ENCODE measurements at regions of chr9 and their contacts with region 1.

Region 1: DNA sequence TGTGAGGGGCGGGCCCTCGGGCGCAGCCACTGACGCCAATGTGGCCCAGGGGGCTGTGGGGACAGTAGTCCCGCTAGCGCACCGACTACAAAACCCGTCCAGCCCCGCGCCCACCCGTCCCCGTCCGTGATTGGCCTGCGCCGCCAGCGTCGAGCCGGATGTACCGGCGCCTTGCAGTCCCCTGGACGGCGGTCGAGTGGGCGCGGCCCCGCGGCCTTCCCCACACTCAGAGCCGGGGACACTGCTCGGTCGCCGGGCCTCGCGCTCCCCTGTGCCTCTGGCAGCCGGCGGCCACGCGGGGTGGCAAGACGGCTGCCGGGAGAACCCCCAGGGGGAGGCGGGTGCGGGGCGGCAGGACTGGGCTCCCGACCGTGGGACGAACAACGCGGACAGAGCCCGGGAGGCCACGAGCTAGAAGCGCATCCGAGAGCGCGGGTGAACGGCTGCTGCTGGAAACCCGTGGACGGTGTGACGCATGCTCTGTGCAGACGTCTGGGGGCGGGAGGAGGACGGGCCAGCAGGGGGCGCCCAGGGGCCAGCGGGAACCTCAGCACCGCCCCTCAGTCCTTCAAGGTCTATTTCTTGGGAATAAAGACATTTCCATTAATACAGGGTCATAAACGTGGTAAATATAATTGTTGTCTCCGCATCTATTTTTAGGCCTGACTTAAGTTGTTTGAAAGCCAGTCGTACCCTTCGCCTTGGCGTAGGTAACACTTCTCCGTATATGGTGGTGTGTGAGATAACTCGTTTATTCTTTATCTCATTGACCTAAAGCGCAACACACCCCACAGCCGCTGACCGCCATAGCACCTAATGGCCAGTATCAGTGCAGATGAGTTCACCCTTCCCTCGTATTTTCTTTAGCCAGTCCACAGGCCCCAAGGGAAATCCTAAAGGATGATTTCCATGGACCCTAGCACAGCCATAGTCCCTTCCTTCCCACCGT is 629 bp upstream of the BICD2 start:
- DNase-seq: peak; percentile 94 to 99 (median 98)
- ATAC-seq: peak; percentile 94
- H3K4me3 ChIP-seq: peak overlapping the region; percentile 68
- H3K4me3 Mint-ChIP-seq: peak overlapping the region; percentile 79 to 96 (median 88)
- H3K27ac ChIP-seq: peak overlapping the region; percentile 98
- H3K27ac Mint-ChIP-seq: peak overlapping the region; percentile 87 to 98 (median 98)
- H3K4me1 ChIP-seq: peaks cover 32 to 33% of the 10 kb centered on the region in 2 donors
- H3K4me1 Mint-ChIP-seq: peaks cover 37 to 65% (median 55%) of the 10 kb centered on the region in 7 donors
- H3K27me3 ChIP-seq: no peaks in the 10 kb centered on the region
- H3K27me3 Mint-ChIP-seq: no peaks in the 10 kb centered on the region

Region 2: DNA sequence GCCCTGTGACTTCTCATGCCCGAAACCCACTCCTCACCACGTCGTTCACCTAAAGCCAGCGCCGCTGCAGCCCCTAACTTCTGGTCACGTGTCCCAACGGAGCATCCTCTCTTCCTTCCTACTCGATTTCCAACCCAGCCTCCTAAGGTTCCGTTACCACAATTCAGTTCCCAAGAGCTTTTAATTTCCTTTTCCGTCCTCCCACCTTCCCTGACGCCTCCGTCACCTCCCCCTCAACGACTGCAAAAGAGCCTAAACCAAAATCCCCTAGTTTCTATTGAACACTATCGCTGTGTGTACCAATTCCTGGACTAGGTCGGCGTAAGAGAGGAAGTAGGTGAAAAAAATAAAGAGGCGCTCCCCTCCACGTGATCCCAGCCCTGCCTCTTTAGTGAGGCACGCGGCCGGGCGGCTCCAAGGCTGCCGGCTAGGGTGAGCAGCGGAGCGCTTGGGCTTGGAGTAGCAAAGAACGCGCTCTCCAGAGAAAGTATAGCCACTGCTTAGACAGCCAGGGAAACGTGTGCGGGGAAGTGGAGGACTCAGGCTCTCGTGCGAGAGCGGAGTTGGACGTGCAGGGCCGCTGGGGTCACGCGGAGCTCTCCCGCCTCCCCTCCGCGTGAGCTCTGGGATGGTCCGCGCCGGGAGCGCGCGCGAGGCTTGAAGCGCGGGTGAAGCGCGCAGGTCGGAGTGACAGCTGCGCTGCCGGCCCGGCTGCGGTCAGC is 439.8 kb before region 1 on chr9 and contains the starts of genes CENPP and NOL8:
- CTCF ChIA-PET with region 1: no interaction called
- POLR2A ChIA-PET with region 1: interaction called, 3 read pairs
- intact Hi-C with region 1: loop called (anchors 1 kb)
- DNase-seq: peak; percentile 75 to 91 (median 89)
- ATAC-seq: peak; percentile 95
- H3K4me3 ChIP-seq: peak within 1 kb of the TSS; percentile 90
- H3K4me3 Mint-ChIP-seq: peak within 1 kb of the TSS; percentile 94 to 100 (median 98)
- H3K27ac ChIP-seq: peak within 1 kb of the TSS; percentile 88
- H3K27ac Mint-ChIP-seq: peak within 1 kb of the TSS; percentile 97 to 100 (median 99)
- H3K4me1 ChIP-seq: peaks cover 11 to 12% of the 10 kb centered on the region in 2 donors
- H3K4me1 Mint-ChIP-seq: peaks cover 14 to 41% (median 35%) of the 10 kb centered on the region in 7 donors
- H3K27me3 ChIP-seq: no peaks in the 10 kb centered on the region
- H3K27me3 Mint-ChIP-seq: no peaks in the 10 kb centered on the region
- total RNA-seq, gene CENPP: 2.5 to 24.3 (median 4.1) TPM
- total RNA-seq, gene NOL8: 42.8 to 115 (median 67.2) TPM

Region 3: GRCh38 chr9:92781923-92782322 is 16.7 kb after region 1 on chr9:
- CTCF ChIA-PET with region 1: no interaction called
- POLR2A ChIA-PET with region 1: interaction called, 4 read pairs
- intact Hi-C with region 1: loop called in 1 of 2 experiments (anchors 1 kb)
- DNase-seq: peak in 1 of 9 donors; percentile 41
- ATAC-seq: peak; percentile 57
- H3K4me3 ChIP-seq: no peak overlapping the region
- H3K4me3 Mint-ChIP-seq: peak overlapping the region in 1 of 10 donors; percentile 26
- H3K27ac ChIP-seq: no peak overlapping the region
- H3K27ac Mint-ChIP-seq: peak overlapping the region in 7 of 9 donors; percentile 38 to 80 (median 74)
- H3K4me1 ChIP-seq: no peaks in the 10 kb centered on the region
- H3K4me1 Mint-ChIP-seq: peaks cover 0 to 11% (median 8%) of the 10 kb centered on the region in 7 donors
- H3K27me3 ChIP-seq: no peaks in the 10 kb centered on the region
- H3K27me3 Mint-ChIP-seq: peaks cover 0 to 10% (median 0%) of the 10 kb centered on the region in 5 donors

Region 4: GRCh38 chr9:92877531-92878430 is 112.5 kb after region 1 on chr9 and contains the start of gene ZNF484:
- CTCF ChIA-PET with region 1: no interaction called
- POLR2A ChIA-PET with region 1: no interaction called
- intact Hi-C with region 1: loop called (anchors 1 kb)
- DNase-seq: peak; percentile 86 to 97 (median 94)
- ATAC-seq: peak; percentile 99
- H3K4me3 ChIP-seq: peak within 1 kb of the TSS; percentile 77
- H3K4me3 Mint-ChIP-seq: peak within 1 kb of the TSS; percentile 91 to 100 (median 99)
- H3K27ac ChIP-seq: peak within 1 kb of the TSS; percentile 90
- H3K27ac Mint-ChIP-seq: peak within 1 kb of the TSS; percentile 94 to 100 (median 99)
- H3K4me1 ChIP-seq: peaks cover 0 to 15% of the 10 kb centered on the region in 2 donors
- H3K4me1 Mint-ChIP-seq: peaks cover 28 to 69% (median 58%) of the 10 kb centered on the region in 7 donors
- H3K27me3 ChIP-seq: no peaks in the 10 kb centered on the region
- H3K27me3 Mint-ChIP-seq: no peaks in the 10 kb centered on the region
- total RNA-seq, gene ZNF484: 12.4 to 25.4 (median 14.0) TPM

Region 5: GRCh38 chr9:92963831-92964626 is 198.8 kb after region 1 on chr9:
- CTCF ChIA-PET with region 1: no interaction called
- POLR2A ChIA-PET with region 1: interaction called, 4 read pairs
- intact Hi-C with region 1: loop called (anchors 1 to 5 kb)
- DNase-seq: peak; percentile 54 to 94 (median 93)
- ATAC-seq: peak; percentile 84
- H3K4me3 ChIP-seq: peak overlapping the region; percentile 85
- H3K4me3 Mint-ChIP-seq: peak overlapping the region; percentile 86 to 98 (median 93)
- H3K27ac ChIP-seq: peak overlapping the region; percentile 85
- H3K27ac Mint-ChIP-seq: peak overlapping the region; percentile 96 to 99 (median 98)
- H3K4me1 ChIP-seq: peaks cover 60 to 67% of the 10 kb centered on the region in 2 donors
- H3K4me1 Mint-ChIP-seq: peaks cover 40 to 63% (median 56%) of the 10 kb centered on the region in 7 donors
- H3K27me3 ChIP-seq: no peaks in the 10 kb centered on the region
- H3K27me3 Mint-ChIP-seq: no peaks in the 10 kb centered on the region

Region 6: DNA sequence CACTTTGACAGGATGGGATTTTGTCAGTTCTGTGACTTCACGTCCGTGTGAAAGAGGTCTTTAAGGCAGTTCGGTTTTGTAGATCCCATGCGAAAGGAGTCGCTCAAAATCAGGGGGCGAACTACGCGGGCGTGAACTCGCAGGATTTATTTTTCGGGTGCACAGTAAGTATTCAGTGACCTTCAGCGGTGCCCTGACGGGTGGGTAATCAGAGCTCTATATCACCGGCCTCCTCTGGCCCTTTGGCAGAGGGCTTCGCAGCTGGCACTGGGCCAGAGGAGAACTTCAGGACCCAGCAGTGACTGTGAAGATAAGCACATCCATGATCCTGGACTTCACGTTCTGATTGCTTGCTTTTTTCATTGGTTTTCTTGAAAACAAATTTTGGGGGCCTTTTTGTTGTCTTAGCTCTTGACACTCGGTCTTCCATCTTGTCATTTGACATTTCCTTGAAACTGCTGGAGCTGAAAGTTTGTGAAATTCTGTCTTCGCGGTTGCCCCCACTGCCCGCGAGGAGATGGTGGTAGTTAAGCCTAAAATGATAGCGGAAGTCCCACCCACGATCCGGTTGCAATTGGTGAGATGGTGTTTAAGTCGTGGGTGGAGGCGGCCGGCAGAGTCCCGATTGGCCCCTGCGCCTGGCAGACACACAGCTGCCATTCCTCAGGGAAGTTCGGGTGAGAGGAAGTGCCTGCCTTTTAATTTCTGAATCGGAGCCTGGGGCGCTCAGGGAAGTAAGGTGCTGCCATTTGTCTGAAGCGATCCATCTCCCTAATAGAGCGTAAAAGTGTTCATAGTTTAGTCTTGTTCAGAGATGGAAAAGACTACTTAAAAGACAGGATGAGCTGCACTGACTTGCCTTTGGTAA is 688.0 kb after region 1 on chr9 and contains the start of gene FAM120AOS:
- CTCF ChIA-PET with region 1: no interaction called
- POLR2A ChIA-PET with region 1: interaction called, 3 read pairs
- intact Hi-C with region 1: loop called (anchors 1 to 5 kb)
- DNase-seq: peak; percentile 50 to 85 (median 76)
- ATAC-seq: peak; percentile 82
- H3K4me3 ChIP-seq: peak within 1 kb of the TSS; percentile 72
- H3K4me3 Mint-ChIP-seq: peak within 1 kb of the TSS; percentile 89 to 100 (median 95)
- H3K27ac ChIP-seq: peak within 1 kb of the TSS; percentile 87
- H3K27ac Mint-ChIP-seq: peak within 1 kb of the TSS; percentile 83 to 96 (median 94)
- H3K4me1 ChIP-seq: peaks cover 31 to 50% of the 10 kb centered on the region in 2 donors
- H3K4me1 Mint-ChIP-seq: peaks cover 39 to 69% (median 57%) of the 10 kb centered on the region in 7 donors
- H3K27me3 ChIP-seq: no peaks in the 10 kb centered on the region
- H3K27me3 Mint-ChIP-seq: no peaks in the 10 kb centered on the region
- total RNA-seq, gene FAM120AOS: 36.7 to 49.5 (median 42.3) TPM

Region 7: DNA sequence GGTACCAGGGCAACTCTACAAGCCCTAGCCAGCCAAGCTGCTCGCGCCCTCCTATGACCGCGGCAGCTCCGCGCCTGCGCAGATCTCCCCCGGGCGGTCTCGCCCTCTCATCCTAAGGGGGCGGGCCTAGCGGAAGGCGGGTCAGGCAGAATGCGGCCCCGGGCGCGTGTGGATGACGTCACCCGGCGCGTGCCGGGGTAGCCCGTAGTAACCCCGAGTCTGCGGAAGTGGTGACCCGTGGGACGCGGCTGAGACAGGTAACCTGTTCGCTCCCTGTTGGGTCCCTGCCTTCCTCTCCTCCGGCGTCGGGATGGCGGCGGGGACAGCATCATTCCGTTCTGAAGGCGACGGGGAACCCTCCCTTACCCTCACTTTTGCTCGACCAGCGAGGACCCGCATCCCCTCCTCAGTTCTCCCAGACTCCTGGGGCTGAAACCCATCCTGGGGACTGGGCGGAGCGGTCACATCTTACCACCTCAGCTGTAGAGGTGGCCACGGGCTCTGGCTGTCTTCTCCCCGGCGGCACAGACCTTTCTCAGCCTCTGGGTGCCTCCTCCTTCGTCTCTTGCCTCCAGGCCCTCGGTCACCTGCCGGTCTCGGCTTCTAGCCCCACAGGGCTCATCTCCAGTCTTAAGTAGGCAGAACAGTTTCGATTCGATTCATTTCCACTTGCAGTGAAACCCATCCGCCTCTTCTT is 1961.4 kb after region 1 on chr9 and contains the start of gene AOPEP:
- CTCF ChIA-PET with region 1: no interaction called
- POLR2A ChIA-PET with region 1: no interaction called
- intact Hi-C with region 1: loop called in 1 of 2 experiments (anchors 10 kb)
- DNase-seq: peak; percentile 98 to 100 (median 99)
- ATAC-seq: peak; percentile 99
- H3K4me3 ChIP-seq: peak within 1 kb of the TSS; percentile 92
- H3K4me3 Mint-ChIP-seq: peak within 1 kb of the TSS; percentile 88 to 100 (median 98)
- H3K27ac ChIP-seq: peak within 1 kb of the TSS; percentile 82
- H3K27ac Mint-ChIP-seq: peak within 1 kb of the TSS; percentile 92 to 100 (median 98)
- H3K4me1 ChIP-seq: peaks cover 7% of the 10 kb centered on the region in 2 donors
- H3K4me1 Mint-ChIP-seq: peaks cover 7 to 24% (median 19%) of the 10 kb centered on the region in 7 donors
- H3K27me3 ChIP-seq: no peaks in the 10 kb centered on the region
- H3K27me3 Mint-ChIP-seq: peaks cover 0 to 2% (median 0%) of the 10 kb centered on the region in 5 donors
- total RNA-seq, gene AOPEP: 11.0 to 19.0 (median 14.9) TPM